ENCODE measurements at regions of chr14 and their contacts with region 1.

Region 1: DNA sequence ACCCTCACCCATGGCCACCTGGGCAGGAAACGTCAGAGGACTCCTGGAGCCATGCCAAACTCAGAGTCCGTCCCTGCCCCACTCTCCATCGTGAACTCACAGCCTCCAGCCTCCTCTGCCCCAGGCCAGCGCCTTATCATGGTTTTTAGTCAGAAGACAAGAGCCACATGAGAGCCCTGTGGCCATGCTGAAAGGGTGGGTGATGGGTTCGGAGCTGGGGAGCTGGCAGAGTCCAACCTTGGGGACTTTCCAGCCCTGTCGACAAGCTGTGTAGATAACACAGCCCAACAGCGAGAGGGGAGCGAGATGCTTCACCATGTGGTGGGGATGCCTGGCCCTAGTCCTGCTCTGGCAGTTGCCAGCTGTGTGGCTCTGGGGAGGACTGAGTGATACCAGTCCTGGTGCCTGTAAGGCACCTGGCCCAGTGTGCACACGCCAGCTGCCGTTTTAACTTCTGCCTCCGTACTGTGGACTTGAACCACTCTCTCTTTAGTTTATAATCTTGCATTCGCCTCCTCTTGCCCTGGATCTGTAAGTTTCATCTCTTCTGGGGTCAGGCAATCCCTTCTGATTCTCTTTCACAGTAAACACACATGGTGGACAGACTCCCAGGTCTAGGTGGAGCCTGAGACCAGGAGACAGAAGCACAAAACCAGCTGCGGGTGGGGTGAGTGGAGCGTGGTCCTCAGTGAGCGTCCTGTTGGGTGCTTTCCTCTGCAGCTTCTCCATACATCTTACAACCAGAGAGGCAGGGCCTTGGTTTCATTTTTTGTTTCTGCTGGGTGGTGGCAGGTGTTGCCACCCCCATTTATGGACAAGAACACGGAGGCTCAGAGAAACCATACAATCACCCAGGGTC is 55.3 kb downstream of the RIN3 start:
- DNase-seq: peak in 6 of 9 experiments; percentile 46 to 90 (median 68)
- ATAC-seq: peak; percentile 80
- H3K4me3 ChIP-seq: peak overlapping the region; percentile 12 to 17
- H3K4me3 Mint-ChIP-seq: peak overlapping the region; percentile 83
- H3K27ac ChIP-seq: peak overlapping the region; percentile 17 to 91
- H3K27ac Mint-ChIP-seq: peak overlapping the region; percentile 99
- H3K4me1 ChIP-seq: peaks cover 30% of the 10 kb centered on the region
- H3K4me1 Mint-ChIP-seq: peaks cover 67% of the 10 kb centered on the region
- H3K27me3 ChIP-seq: no peaks in the 10 kb centered on the region
- H3K27me3 Mint-ChIP-seq: no peaks in the 10 kb centered on the region
- CTCF ChIP-seq: no peak

Region 2: GRCh38 chr14:92556255-92556741 is 12.6 kb before region 1 on chr14:
- CTCF ChIA-PET with region 1: interaction called, 11 read pairs
- POLR2A ChIA-PET with region 1: interaction called, 11 read pairs
- intact Hi-C with region 1: loop called in 1 of 2 experiments (anchors 2 kb)
- DNase-seq: no peak
- ATAC-seq: peak; percentile 27
- H3K4me3 ChIP-seq: no peak overlapping the region
- H3K4me3 Mint-ChIP-seq: peak overlapping the region; percentile 23
- H3K27ac ChIP-seq: peak overlapping the region in 1 of 2 experiments; percentile 25
- H3K27ac Mint-ChIP-seq: peak overlapping the region; percentile 85
- H3K4me1 ChIP-seq: peaks cover 72% of the 10 kb centered on the region
- H3K4me1 Mint-ChIP-seq: peaks cover 85% of the 10 kb centered on the region
- H3K27me3 ChIP-seq: no peaks in the 10 kb centered on the region
- H3K27me3 Mint-ChIP-seq: no peaks in the 10 kb centered on the region
- CTCF ChIP-seq: no peak

Measured in CD8-positive, alpha-beta T cell (primary cell).